K562 (cell line): ENCODE measurements at regions of chr15 and their contacts with region 1.

Region 1: DNA sequence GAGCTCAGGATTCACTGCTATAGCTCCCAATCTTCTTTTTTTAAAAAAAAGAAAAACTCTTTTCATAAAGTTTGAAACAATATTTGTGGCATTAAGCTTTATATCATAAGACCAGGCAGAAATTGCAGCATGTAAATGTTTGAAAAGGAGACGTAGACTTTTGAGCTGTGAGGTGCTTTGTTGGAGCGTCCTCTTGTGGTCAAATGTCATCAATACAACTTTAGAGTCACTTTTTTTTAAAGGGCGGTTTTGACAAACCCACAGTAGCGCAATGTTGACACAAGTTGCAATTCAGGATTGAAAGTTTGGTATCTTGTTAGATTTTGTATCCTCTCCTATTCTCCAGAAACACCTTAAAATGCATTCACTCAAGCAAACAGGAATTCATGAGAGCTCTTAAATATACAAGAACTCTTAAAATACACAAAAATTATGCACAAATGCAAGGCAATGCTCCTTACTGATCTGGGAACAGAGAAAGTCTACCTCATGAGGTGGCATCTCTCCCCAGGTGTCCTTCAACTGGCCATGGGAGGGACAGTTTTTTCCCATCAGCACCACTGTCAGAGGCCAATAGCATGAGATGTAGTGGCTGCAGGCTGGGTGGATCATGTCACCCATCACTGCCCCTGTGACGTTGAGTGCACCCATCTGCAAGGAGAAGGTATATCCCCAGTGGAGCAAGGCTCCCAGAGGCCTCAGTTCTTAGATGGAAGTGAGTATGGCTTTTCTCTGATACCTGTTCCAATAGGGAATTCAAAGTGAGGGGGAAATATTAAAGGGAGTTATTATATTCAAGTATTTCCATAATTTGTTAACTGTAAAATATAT is 70.7 kb downstream of the ANXA2 start:
- DNase-seq: peak; percentile 31 to 68 (median 48)
- ATAC-seq: peak; percentile 69
- H3K4me3 ChIP-seq: no peak overlapping the region
- H3K27ac ChIP-seq: no peak overlapping the region
- H3K4me1 ChIP-seq: no peaks in the 10 kb centered on the region
- H3K27me3 ChIP-seq: peaks cover 0 to 10% of the 10 kb centered on the region in 2 experiments; a peak in 3 of 5 replicates
- CTCF ChIP-seq: peak; percentile 69 to 92 (median 75)
- EP300 ChIP-seq: no peak
- POLR2A ChIP-seq: no peak
- RAD21 ChIP-seq: peak; percentile 91 to 95

Region 2: GRCh38 chr15:59725172-59725486 is 601.9 kb before region 1 on chr15:
- CTCF ChIA-PET with region 1: interaction called, 18 read pairs
- POLR2A ChIA-PET with region 1: no interaction called
- in situ Hi-C with region 1: no loop called
- intact Hi-C with region 1: loop called (anchors 2 kb)
- DNase-seq: no peak
- ATAC-seq: no peak
- H3K4me3 ChIP-seq: no peak overlapping the region
- H3K27ac ChIP-seq: no peak overlapping the region
- H3K4me1 ChIP-seq: no peaks in the 10 kb centered on the region
- H3K27me3 ChIP-seq: peaks cover 11 to 15% of the 10 kb centered on the region in 2 experiments
- CTCF ChIP-seq: no peak
- EP300 ChIP-seq: no peak
- POLR2A ChIP-seq: no peak
- RAD21 ChIP-seq: no peak

Region 3: GRCh38 chr15:59917504-59918157 is 409.4 kb before region 1 on chr15:
- CTCF ChIA-PET with region 1: interaction called, 8 read pairs
- POLR2A ChIA-PET with region 1: no interaction called
- in situ Hi-C with region 1: no loop called
- intact Hi-C with region 1: loop called (anchors 5 kb)
- DNase-seq: peak; percentile 35 to 63 (median 52)
- ATAC-seq: peak; percentile 100
- H3K4me3 ChIP-seq: no peak overlapping the region
- H3K27ac ChIP-seq: no peak overlapping the region
- H3K4me1 ChIP-seq: no peaks in the 10 kb centered on the region
- H3K27me3 ChIP-seq: peaks cover 0 to under 1% of the 10 kb centered on the region in 2 experiments; a peak in 2 of 5 replicates
- CTCF ChIP-seq: peak; percentile 66 to 70 (median 67)
- EP300 ChIP-seq: no peak
- POLR2A ChIP-seq: no peak
- RAD21 ChIP-seq: peak; percentile 75 to 78

Region 4: DNA sequence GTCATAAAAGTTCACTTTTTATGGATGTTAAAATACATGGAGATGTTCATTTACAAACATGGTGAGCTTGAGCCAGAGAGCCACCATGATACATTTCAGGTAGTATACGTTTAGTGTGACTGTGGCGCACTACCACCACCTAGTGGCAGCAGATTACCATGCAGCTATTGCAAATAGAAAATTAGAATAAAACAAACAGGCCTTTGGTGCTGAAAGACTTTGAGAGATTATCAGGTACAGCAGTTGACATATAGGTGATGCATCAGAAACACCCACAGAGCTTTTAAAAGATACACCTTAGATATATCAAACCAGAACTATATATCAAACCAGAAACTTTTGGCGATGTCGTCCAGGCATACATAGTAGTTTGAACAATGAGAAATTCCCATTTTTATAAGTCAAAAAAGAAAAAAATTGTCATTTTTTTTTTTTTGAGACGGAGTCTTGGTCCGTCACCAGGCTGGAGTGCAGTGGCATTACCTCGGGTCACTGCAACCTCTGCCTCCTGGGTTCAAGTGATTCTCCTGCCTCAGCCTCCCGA is 193.9 kb after region 1 on chr15:
- CTCF ChIA-PET with region 1: interaction called, 33 read pairs
- POLR2A ChIA-PET with region 1: no interaction called
- in situ Hi-C with region 1: loop called (anchors 5 kb)
- intact Hi-C with region 1: loop called (anchors 1 kb)
- DNase-seq: peak; percentile 52 to 80 (median 54)
- ATAC-seq: peak; percentile 91
- H3K4me3 ChIP-seq: no peak overlapping the region
- H3K27ac ChIP-seq: no peak overlapping the region
- H3K4me1 ChIP-seq: no peaks in the 10 kb centered on the region
- H3K27me3 ChIP-seq: peaks cover 2 to 6% of the 10 kb centered on the region in 2 experiments; a peak in 3 of 5 replicates
- CTCF ChIP-seq: peak; percentile 80 to 94 (median 87)
- EP300 ChIP-seq: no peak
- POLR2A ChIP-seq: no peak
- RAD21 ChIP-seq: peak; percentile 86 to 89

Region 5: DNA sequence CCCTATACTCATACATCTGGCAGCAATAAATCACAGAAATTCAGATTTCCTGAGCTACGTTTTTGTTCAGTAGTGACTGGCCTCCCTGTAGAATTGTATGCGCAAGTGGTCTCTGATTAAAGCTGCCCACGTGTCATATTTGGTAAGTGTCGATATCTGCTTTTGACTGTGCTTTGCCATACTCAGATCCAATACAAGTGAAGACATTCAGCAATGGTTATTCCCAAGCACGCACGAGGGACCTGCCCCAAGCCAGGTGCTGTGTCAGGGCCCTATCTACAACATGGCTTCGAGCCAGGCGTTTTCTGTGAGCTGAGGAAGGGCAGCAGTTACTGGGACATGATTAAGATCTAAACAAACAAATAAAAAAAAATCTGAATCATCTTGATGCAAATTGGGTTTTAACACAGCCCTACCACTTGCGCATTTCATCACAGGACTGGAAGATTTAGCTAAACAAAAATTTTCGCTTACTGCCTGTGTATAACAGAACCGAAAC is 199.1 kb after region 1 on chr15:
- CTCF ChIA-PET with region 1: interaction called, 33 read pairs
- POLR2A ChIA-PET with region 1: no interaction called
- in situ Hi-C with region 1: loop called (anchors 5 kb)
- intact Hi-C with region 1: no loop called
- DNase-seq: peak in 1 of 4 experiments; percentile 10
- ATAC-seq: no peak
- H3K4me3 ChIP-seq: no peak overlapping the region
- H3K27ac ChIP-seq: no peak overlapping the region
- H3K4me1 ChIP-seq: no peaks in the 10 kb centered on the region; a peak in 1 of 5 replicates
- H3K27me3 ChIP-seq: peaks cover 0 to 2% of the 10 kb centered on the region in 2 experiments; a peak in 2 of 5 replicates
- CTCF ChIP-seq: no peak
- EP300 ChIP-seq: no peak
- POLR2A ChIP-seq: no peak
- RAD21 ChIP-seq: no peak

Region 6: GRCh38 chr15:60916679-60917460 is 589.8 kb after region 1 on chr15:
- CTCF ChIA-PET with region 1: no interaction called
- POLR2A ChIA-PET with region 1: no interaction called
- in situ Hi-C with region 1: loop called (anchors 25 kb)
- intact Hi-C with region 1: no loop called
- DNase-seq: peak; percentile 37 to 69 (median 60)
- ATAC-seq: peak; percentile 89
- H3K4me3 ChIP-seq: no peak overlapping the region
- H3K27ac ChIP-seq: no peak overlapping the region
- H3K4me1 ChIP-seq: no peaks in the 10 kb centered on the region
- H3K27me3 ChIP-seq: no peaks in the 10 kb centered on the region
- CTCF ChIP-seq: peak; percentile 66 to 73 (median 71)
- EP300 ChIP-seq: no peak
- POLR2A ChIP-seq: no peak
- RAD21 ChIP-seq: peak; percentile 56 to 67